IMR-90 (cell line): ENCODE measurements at regions of chr12 and their contacts with region 1.

Region 1: GRCh38 chr12:95083938-95084337 is 10.5 kb upstream of the NR2C1 start:
- DNase-seq: peak; percentile 89
- ATAC-seq: peak; percentile 96
- H3K4me3 ChIP-seq: no peak overlapping the region
- H3K27ac ChIP-seq: peak overlapping the region; percentile 28; the same call in 1 of the 2 replicates
- H3K4me1 ChIP-seq: no peaks in the 10 kb centered on the region; the same call in 1 of the 2 replicates
- H3K27me3 ChIP-seq: no peaks in the 10 kb centered on the region
- CTCF ChIP-seq: no peak
- POLR2A ChIP-seq: no peak
- RAD21 ChIP-seq: no peak

Region 2: DNA sequence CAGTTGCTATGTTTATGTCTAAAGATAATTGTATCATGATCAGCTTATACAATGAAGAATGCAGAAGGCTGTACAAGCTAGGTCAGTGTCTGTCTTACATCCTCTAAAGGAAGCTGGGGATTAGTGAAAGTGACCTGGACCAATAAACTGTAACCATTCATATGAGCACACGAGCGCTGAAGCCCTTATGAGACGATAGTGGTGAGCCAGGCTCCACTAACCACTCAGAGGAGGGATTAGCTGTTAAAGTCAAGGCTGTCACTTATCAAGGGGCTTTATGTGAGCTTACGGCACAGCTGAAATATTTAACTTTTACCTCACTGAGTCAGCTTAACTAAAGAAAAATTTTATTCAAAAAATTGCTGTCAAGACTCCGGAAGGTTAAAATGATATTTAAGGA is 110.7 kb before region 1 on chr12:
- CTCF ChIA-PET with region 1: no interaction called
- POLR2A ChIA-PET with region 1: no interaction called
- dilution Hi-C with region 1: no loop called
- in situ Hi-C with region 1: no loop called
- intact Hi-C with region 1: no loop called
- DNase-seq: peak; percentile 94
- ATAC-seq: peak; percentile 98
- H3K4me3 ChIP-seq: no peak overlapping the region
- H3K27ac ChIP-seq: no peak overlapping the region
- H3K4me1 ChIP-seq: no peaks in the 10 kb centered on the region
- H3K27me3 ChIP-seq: no peaks in the 10 kb centered on the region
- CTCF ChIP-seq: no peak
- POLR2A ChIP-seq: no peak
- RAD21 ChIP-seq: no peak

Region 3: GRCh38 chr12:95037906-95038305 is 46.0 kb before region 1 on chr12:
- CTCF ChIA-PET with region 1: no interaction called
- POLR2A ChIA-PET with region 1: no interaction called
- dilution Hi-C with region 1: no loop called
- in situ Hi-C with region 1: no loop called
- intact Hi-C with region 1: no loop called
- DNase-seq: no peak
- ATAC-seq: no peak
- H3K4me3 ChIP-seq: no peak overlapping the region
- H3K27ac ChIP-seq: no peak overlapping the region
- H3K4me1 ChIP-seq: no peaks in the 10 kb centered on the region
- H3K27me3 ChIP-seq: no peaks in the 10 kb centered on the region
- CTCF ChIP-seq: no peak
- POLR2A ChIP-seq: no peak
- RAD21 ChIP-seq: no peak

Region 4: GRCh38 chr12:95051241-95051640 is 32.7 kb before region 1 on chr12:
- CTCF ChIA-PET with region 1: no interaction called
- POLR2A ChIA-PET with region 1: no interaction called
- dilution Hi-C with region 1: no loop called
- in situ Hi-C with region 1: no loop called
- intact Hi-C with region 1: no loop called
- DNase-seq: peak; percentile 7
- ATAC-seq: no peak
- H3K4me3 ChIP-seq: no peak overlapping the region
- H3K27ac ChIP-seq: no peak overlapping the region
- H3K4me1 ChIP-seq: no peaks in the 10 kb centered on the region
- H3K27me3 ChIP-seq: no peaks in the 10 kb centered on the region
- CTCF ChIP-seq: no peak
- POLR2A ChIP-seq: no peak
- RAD21 ChIP-seq: no peak

Region 5: GRCh38 chr12:95248604-95249360 is 164.8 kb after region 1 on chr12:
- CTCF ChIA-PET with region 1: no interaction called
- POLR2A ChIA-PET with region 1: no interaction called
- dilution Hi-C with region 1: no loop called
- in situ Hi-C with region 1: no loop called
- intact Hi-C with region 1: no loop called
- DNase-seq: peak; percentile 41
- ATAC-seq: peak; percentile 36
- H3K4me3 ChIP-seq: no peak overlapping the region
- H3K27ac ChIP-seq: peak overlapping the region; percentile 81; the same call in 1 of the 2 replicates
- H3K4me1 ChIP-seq: peaks cover 7% of the 10 kb centered on the region
- H3K27me3 ChIP-seq: no peaks in the 10 kb centered on the region
- CTCF ChIP-seq: no peak
- POLR2A ChIP-seq: no peak
- RAD21 ChIP-seq: no peak

Region 6: GRCh38 chr12:95600567-95600966 is 516.6 kb after region 1 on chr12:
- CTCF ChIA-PET with region 1: no interaction called
- POLR2A ChIA-PET with region 1: interaction called, 10 read pairs
- dilution Hi-C with region 1: no loop called
- in situ Hi-C with region 1: no loop called
- intact Hi-C with region 1: no loop called
- DNase-seq: no peak
- ATAC-seq: no peak
- H3K4me3 ChIP-seq: no peak overlapping the region
- H3K27ac ChIP-seq: peak overlapping the region; percentile 0; the same call in 1 of the 2 replicates
- H3K4me1 ChIP-seq: peaks cover 15% of the 10 kb centered on the region
- H3K27me3 ChIP-seq: no peaks in the 10 kb centered on the region
- CTCF ChIP-seq: no peak
- POLR2A ChIP-seq: no peak
- RAD21 ChIP-seq: no peak